Activated CD4-positive, alpha-beta memory T cell treated with anti-CD3 and anti-CD28 coated beads, Interleukin-2, amount 10 ng/mL, durations not matched to agents 7 days and 5 days (primary cell): ENCODE measurements at regions of chr2 and their contacts with region 1.

Region 1: GRCh38 chr2:235779444-235779896 is 285.6 kb downstream of the AGAP1 start:
- DNase-seq: peak; percentile 69
- H3K4me3 Mint-ChIP-seq: no peak overlapping the region
- H3K27ac Mint-ChIP-seq: no peak overlapping the region
- H3K4me1 Mint-ChIP-seq: no peaks in the 10 kb centered on the region
- H3K27me3 Mint-ChIP-seq: peaks cover 7% of the 10 kb centered on the region

Region 2: GRCh38 chr2:235766278-235766677 is 13.2 kb before region 1 on chr2:
- CTCF ChIA-PET with region 1: interaction called, 23 read pairs
- POLR2A ChIA-PET with region 1: no interaction called
- DNase-seq: peak; percentile 51
- H3K4me3 Mint-ChIP-seq: no peak overlapping the region
- H3K27ac Mint-ChIP-seq: no peak overlapping the region
- H3K4me1 Mint-ChIP-seq: no peaks in the 10 kb centered on the region
- H3K27me3 Mint-ChIP-seq: no peaks in the 10 kb centered on the region

Region 3: GRCh38 chr2:235789552-235789951 is 10.1 kb after region 1 on chr2:
- CTCF ChIA-PET with region 1: interaction called, 14 read pairs
- POLR2A ChIA-PET with region 1: no interaction called
- DNase-seq: no peak
- H3K4me3 Mint-ChIP-seq: no peak overlapping the region
- H3K27ac Mint-ChIP-seq: no peak overlapping the region
- H3K4me1 Mint-ChIP-seq: no peaks in the 10 kb centered on the region
- H3K27me3 Mint-ChIP-seq: peaks cover 7% of the 10 kb centered on the region

Region 4: DNA sequence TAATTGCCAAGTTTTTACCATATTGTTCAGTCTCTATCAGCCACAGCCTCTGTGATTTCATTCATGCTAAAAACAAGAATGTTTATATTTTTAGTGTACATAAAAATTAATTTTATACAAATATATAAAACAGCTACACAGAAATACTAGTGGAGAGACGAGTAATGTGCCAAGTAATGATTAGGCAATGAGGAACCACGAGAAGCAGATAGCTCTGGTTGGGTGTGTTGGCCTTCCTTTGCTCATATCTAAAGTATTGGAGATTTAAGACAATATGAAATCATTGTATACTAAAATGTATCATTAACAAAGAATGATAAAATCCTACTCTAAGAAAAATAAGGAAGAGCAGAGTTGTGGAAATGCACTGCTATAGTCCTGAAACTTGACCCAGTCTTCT is 41.1 kb after region 1 on chr2:
- CTCF ChIA-PET with region 1: no interaction called
- POLR2A ChIA-PET with region 1: no interaction called
- DNase-seq: no peak
- H3K4me3 Mint-ChIP-seq: no peak overlapping the region
- H3K27ac Mint-ChIP-seq: no peak overlapping the region
- H3K4me1 Mint-ChIP-seq: no peaks in the 10 kb centered on the region
- H3K27me3 Mint-ChIP-seq: no peaks in the 10 kb centered on the region

Region 5: DNA sequence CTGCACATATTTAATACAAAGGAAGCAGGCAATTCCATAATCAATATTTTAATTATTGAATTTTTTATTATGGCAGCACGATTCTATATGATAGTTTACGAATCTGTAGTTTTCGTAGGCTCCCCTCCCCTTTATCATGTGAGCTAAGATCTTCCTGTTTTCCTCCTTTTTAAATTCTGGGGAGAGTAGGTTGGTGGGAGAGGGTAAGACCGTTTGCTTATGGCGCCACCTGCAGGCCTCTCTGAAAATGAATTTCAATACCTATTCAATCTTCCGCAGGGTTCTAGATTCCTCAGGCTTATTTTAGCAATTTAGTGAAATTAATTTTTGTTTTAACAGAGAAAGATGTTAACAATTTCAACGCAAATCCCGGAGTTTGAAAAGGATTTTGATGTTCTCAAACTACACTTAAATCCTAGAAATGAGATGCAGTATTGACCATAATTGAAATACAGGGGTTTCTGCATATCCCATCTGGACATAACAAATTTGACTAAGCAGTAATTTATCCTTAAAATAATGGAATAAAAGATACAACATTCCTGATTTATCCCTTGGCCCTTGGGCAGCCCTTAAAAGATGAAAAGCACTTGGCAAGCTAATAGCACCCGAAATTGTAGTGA is 401.5 kb after region 1 on chr2:
- CTCF ChIA-PET with region 1: interaction called, 56 read pairs
- POLR2A ChIA-PET with region 1: no interaction called
- DNase-seq: peak; percentile 42
- H3K4me3 Mint-ChIP-seq: no peak overlapping the region
- H3K27ac Mint-ChIP-seq: no peak overlapping the region
- H3K4me1 Mint-ChIP-seq: peaks cover 2% of the 10 kb centered on the region
- H3K27me3 Mint-ChIP-seq: peaks cover 30% of the 10 kb centered on the region